ENCODE measurements at regions of chr10 and their contacts with region 1.

Region 1: GRCh38 chr10:93115661-93116383 is 42.1 kb downstream of the CYP26A1 start:
- DNase-seq: peak; percentile 44 to 68 (median 48)
- H3K4me3 ChIP-seq: no peak overlapping the region
- H3K4me3 Mint-ChIP-seq: no peak overlapping the region
- H3K27ac ChIP-seq: no peak overlapping the region
- H3K27ac Mint-ChIP-seq: peak overlapping the region in 1 of 7 donors; percentile 10
- H3K4me1 ChIP-seq: no peaks in the 10 kb centered on the region
- H3K4me1 Mint-ChIP-seq: peaks cover 10% of the 10 kb centered on the region
- H3K27me3 ChIP-seq: peaks cover 0 to 5% of the 10 kb centered on the region in 2 donors
- H3K27me3 Mint-ChIP-seq: peaks cover 4 to 21% (median 12%) of the 10 kb centered on the region in 3 donors
- CTCF ChIP-seq: peak; percentile 47

Region 2: DNA sequence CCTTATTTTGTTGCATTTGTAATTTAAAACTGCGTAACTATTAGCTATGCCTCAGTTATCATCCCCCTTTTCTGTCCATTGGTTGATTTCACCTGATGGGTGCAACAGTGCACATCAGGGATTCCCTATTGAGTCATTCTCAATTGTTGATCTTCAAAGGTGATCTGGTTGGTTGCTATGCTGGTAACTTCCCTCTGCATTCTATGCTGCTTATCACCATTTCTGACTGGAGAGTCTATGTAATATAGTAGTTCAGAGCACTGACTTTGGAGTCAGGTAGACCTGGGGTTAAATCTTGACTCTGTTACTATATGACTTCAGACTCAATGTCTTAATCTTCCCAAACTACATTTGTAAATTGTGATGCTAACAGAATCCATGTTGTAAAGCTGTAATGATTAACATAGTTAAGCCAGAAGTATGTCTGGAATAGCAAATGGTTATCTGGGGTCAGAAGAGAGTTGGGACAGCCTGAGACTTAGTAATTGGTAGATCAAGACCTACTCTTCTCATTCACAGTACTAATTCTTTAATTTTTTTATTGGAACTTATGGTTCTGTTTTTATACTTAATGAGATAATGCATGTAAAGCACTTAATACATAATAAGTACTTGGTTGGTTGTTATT is 229.4 kb before region 1 on chr10:
- intact Hi-C with region 1: no loop called
- DNase-seq: no peak
- H3K4me3 ChIP-seq: no peak overlapping the region
- H3K4me3 Mint-ChIP-seq: no peak overlapping the region
- H3K27ac ChIP-seq: no peak overlapping the region
- H3K27ac Mint-ChIP-seq: no peak overlapping the region
- H3K4me1 ChIP-seq: no peaks in the 10 kb centered on the region
- H3K4me1 Mint-ChIP-seq: peaks cover 4% of the 10 kb centered on the region
- H3K27me3 ChIP-seq: no peaks in the 10 kb centered on the region
- H3K27me3 Mint-ChIP-seq: no peaks in the 10 kb centered on the region
- CTCF ChIP-seq: no peak

Region 3: GRCh38 chr10:93074147-93074596 is 41.6 kb before region 1 on chr10:
- intact Hi-C with region 1: no loop called
- DNase-seq: no peak
- H3K4me3 ChIP-seq: peak overlapping the region in 1 of 3 experiments; percentile 11
- H3K4me3 Mint-ChIP-seq: peak overlapping the region; percentile 9 to 86
- H3K27ac ChIP-seq: no peak overlapping the region
- H3K27ac Mint-ChIP-seq: peak overlapping the region in 1 of 7 donors; percentile 21
- H3K4me1 ChIP-seq: peaks cover 23 to 35% of the 10 kb centered on the region in 2 donors
- H3K4me1 Mint-ChIP-seq: peaks cover 27% of the 10 kb centered on the region
- H3K27me3 ChIP-seq: peaks cover 70 to 90% of the 10 kb centered on the region in 2 donors
- H3K27me3 Mint-ChIP-seq: peaks cover 77 to 96% (median 92%) of the 10 kb centered on the region in 3 donors
- CTCF ChIP-seq: no peak

Region 4: DNA sequence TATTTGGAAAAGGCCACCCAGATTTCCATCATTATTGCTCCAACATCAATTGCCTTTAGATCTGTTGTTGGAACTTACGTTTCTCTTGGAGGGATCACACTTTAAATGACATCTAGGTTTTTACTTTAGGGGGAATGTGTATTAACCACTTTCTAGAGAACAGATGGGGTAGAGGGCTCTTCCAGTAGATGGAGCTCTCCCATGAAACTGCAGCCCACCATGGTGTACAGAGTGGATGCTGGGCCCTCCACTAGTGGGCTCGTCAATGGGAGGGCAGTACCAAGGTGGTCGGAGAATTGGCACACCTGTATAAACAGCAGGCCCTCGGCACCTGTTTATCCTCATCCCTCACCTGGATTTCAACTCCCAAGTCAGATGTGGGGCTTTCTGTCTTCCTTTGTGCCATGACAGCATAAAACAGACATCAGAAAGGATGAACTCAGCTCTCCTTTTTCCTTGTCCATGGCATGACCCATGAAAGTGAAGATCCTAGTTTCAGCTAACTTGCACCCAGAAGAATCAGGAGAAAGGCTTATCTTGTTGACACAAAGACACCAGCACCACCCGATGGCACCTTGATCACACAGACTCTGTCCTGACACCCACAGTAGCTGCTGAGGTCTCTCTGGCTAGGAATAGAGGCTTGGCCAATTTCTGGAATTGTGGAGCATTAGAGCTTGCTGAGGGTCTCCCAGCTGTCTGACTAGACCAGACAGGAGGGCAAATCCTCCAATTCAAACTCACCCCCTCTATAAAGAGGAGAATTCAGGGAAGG is 108.4 kb after region 1 on chr10:
- intact Hi-C with region 1: loop called (anchors 10 kb)
- DNase-seq: peak; percentile 23 to 41 (median 31)
- H3K4me3 ChIP-seq: no peak overlapping the region
- H3K4me3 Mint-ChIP-seq: no peak overlapping the region
- H3K27ac ChIP-seq: no peak overlapping the region
- H3K27ac Mint-ChIP-seq: peak overlapping the region in 1 of 7 donors; percentile 16
- H3K4me1 ChIP-seq: no peaks in the 10 kb centered on the region
- H3K4me1 Mint-ChIP-seq: no peaks in the 10 kb centered on the region
- H3K27me3 ChIP-seq: no peaks in the 10 kb centered on the region
- H3K27me3 Mint-ChIP-seq: peaks cover 0 to 8% (median 7%) of the 10 kb centered on the region in 3 donors
- CTCF ChIP-seq: peak; percentile 23

Region 5: DNA sequence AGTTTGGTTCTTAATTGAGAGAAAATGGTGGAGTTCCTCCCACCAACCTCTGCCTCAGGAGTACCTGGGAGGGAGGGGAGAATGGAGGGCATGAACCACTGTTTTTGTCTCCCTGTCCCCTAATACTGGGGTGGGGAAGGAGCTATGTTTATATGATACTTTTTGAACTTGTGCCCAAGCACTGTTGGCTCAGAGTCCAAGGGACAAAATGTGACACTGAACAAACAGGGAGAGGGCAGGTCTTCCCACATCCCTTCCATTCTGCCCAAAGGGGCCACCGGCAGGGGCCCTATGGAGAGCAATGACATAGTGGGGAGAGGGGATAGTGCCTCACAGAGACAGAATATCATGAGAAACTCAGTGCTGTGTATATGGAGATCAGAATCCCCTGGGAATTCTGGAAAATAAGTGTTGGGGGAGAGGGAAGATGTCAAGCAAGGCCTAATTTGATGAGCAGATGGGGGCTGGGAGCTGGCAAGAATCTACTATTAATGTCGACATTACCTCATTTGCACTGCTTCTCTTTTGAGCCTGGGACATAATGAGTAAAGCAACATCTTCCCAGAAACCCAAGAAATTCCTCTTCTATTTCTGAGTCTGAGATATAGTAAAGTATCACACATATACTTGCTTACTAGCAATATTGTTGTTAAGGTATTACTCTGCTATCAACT is 138.5 kb after region 1 on chr10:
- intact Hi-C with region 1: no loop called
- DNase-seq: no peak
- H3K4me3 ChIP-seq: no peak overlapping the region
- H3K4me3 Mint-ChIP-seq: no peak overlapping the region
- H3K27ac ChIP-seq: no peak overlapping the region
- H3K27ac Mint-ChIP-seq: no peak overlapping the region
- H3K4me1 ChIP-seq: no peaks in the 10 kb centered on the region
- H3K4me1 Mint-ChIP-seq: peaks cover 6% of the 10 kb centered on the region
- H3K27me3 ChIP-seq: no peaks in the 10 kb centered on the region
- H3K27me3 Mint-ChIP-seq: peaks cover 0 to 3% (median 2%) of the 10 kb centered on the region in 3 donors
- CTCF ChIP-seq: no peak

Region 6: DNA sequence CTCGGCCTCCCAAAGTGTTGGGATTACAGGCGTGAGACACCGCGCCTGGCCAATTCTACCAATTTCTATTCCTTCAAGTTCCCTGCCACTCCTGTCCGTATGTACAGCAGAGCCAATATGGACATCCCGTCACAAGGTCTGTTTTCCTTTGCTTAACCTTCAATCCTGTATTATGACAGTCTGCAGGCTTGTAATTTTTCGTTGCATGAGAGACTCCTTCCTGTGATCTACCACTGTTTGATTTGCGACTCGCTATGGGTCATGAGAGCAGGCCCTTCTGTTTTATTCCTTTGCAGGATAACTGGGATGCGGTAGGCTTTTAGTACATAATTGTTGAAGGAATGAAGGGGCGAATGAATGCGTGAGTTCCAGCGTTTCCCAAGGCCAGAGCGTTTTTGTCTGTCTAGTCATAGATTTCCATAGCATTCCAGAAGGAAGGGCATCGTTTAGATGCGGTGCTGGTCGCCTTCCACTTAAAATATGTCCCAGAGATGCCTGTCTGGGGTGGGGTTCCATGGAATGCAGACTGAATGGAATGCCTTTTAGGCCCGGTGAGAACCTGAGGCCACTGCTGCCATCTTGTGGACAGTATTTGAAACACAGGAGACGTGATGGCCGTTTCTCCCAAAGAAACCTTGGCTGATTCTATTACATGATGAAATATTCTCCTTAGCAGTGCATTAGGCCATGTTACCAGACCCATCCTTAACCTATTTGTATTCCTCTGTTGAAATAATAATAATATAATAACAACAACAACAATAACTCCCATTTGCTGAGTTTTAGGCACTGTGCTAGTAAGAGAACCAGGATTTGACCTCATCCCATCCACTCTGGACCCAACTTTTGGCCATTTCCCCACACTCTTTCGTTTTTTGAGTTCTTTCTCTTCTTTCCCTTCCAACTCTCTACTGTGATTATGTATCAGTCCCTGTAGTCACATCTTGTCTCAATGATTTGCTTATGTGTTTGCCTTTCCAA is 173.1 kb after region 1 on chr10:
- intact Hi-C with region 1: loop called (anchors 2 to 10 kb)
- DNase-seq: peak; percentile 36 to 60 (median 55)
- H3K4me3 ChIP-seq: no peak overlapping the region
- H3K4me3 Mint-ChIP-seq: no peak overlapping the region
- H3K27ac ChIP-seq: no peak overlapping the region
- H3K27ac Mint-ChIP-seq: no peak overlapping the region
- H3K4me1 ChIP-seq: peaks cover 6 to 8% of the 10 kb centered on the region in 2 donors
- H3K4me1 Mint-ChIP-seq: peaks cover 14% of the 10 kb centered on the region
- H3K27me3 ChIP-seq: no peaks in the 10 kb centered on the region
- H3K27me3 Mint-ChIP-seq: peaks cover 0 to 11% (median 0%) of the 10 kb centered on the region in 3 donors
- CTCF ChIP-seq: peak; percentile 91

Region 7: GRCh38 chr10:93352638-93353383 is 237.0 kb after region 1 on chr10:
- intact Hi-C with region 1: loop called (anchors 10 kb)
- DNase-seq: peak in 2 of 3 donors; percentile 16 to 32
- H3K4me3 ChIP-seq: no peak overlapping the region
- H3K4me3 Mint-ChIP-seq: no peak overlapping the region
- H3K27ac ChIP-seq: no peak overlapping the region
- H3K27ac Mint-ChIP-seq: no peak overlapping the region
- H3K4me1 ChIP-seq: no peaks in the 10 kb centered on the region
- H3K4me1 Mint-ChIP-seq: peaks cover 2% of the 10 kb centered on the region
- H3K27me3 ChIP-seq: no peaks in the 10 kb centered on the region
- H3K27me3 Mint-ChIP-seq: peaks cover 0 to 3% (median 2%) of the 10 kb centered on the region in 3 donors
- CTCF ChIP-seq: peak; percentile 87

Measured in CD14-positive monocyte (primary cell).